H1 (cell line): ENCODE measurements at regions of chr6 and their contacts with region 1.

Region 1: DNA sequence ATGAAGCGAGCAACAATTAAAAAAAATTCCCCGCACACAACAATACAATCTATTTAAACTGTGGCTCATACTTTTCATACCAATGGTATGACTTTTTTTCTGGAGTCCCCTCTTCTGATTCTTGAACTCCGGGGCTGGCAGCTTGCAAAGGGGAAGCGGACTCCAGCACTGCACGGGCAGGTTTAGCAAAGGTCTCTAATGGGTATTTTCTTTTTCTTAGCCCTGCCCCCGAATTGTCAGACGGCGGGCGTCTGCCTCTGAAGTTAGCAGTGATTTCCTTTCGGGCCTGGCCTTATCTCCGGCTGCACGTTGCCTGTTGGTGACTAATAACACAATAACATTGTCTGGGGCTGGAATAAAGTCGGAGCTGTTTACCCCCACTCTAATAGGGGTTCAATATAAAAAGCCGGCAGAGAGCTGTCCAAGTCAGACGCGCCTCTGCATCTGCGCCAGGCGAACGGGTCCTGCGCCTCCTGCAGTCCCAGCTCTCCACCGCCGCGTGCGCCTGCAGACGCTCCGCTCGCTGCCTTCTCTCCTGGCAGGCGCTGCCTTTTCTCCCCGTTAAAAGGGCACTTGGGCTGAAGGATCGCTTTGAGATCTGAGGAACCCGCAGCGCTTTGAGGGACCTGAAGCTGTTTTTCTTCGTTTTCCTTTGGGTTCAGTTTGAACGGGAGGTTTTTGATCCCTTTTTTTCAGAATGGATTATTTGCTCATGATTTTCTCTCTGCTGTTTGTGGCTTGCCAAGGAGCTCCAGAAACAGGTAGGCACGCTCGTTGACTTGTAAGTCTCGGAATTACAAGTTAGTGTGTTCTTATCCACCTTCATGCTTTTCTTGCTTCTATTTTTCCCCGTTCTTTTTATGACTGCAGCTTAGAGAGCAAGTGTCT is at the start of gene EDN1:
- DNase-seq: peak; percentile 61 to 81
- H3K4me3 ChIP-seq: peak within 1 kb of the TSS; percentile 26 to 69 (median 50); a peak in 7 of 8 replicates
- H3K27ac ChIP-seq: no peak within 1 kb of the TSS
- H3K4me1 ChIP-seq: peaks cover 9 to 20% (median 11%) of the 10 kb centered on the region in 4 experiments
- H3K27me3 ChIP-seq: peaks cover 0 to 10% (median 2%) of the 10 kb centered on the region in 4 experiments; a peak in 4 of 7 replicates
- CTCF ChIP-seq: peak; percentile 52 to 58 (median 54)
- EP300 ChIP-seq: no peak
- POLR2A ChIP-seq: no peak
- RAD21 ChIP-seq: peak; percentile 54 to 65
- total RNA-seq, gene EDN1: 1.1 and 1.2 TPM in 2 replicates

Region 2: GRCh38 chr6:12208190-12208589 is 82.0 kb before region 1 on chr6:
- CTCF ChIA-PET with region 1: no interaction called
- POLR2A ChIA-PET with region 1: no interaction called
- DNase-seq: no peak
- H3K4me3 ChIP-seq: no peak overlapping the region
- H3K27ac ChIP-seq: no peak overlapping the region
- H3K4me1 ChIP-seq: peaks cover 0 to under 1% (median 0%) of the 10 kb centered on the region in 4 experiments; a peak in 1 of 7 replicates
- H3K27me3 ChIP-seq: no peaks in the 10 kb centered on the region
- CTCF ChIP-seq: no peak
- EP300 ChIP-seq: no peak
- POLR2A ChIP-seq: no peak
- RAD21 ChIP-seq: no peak

Region 3: DNA sequence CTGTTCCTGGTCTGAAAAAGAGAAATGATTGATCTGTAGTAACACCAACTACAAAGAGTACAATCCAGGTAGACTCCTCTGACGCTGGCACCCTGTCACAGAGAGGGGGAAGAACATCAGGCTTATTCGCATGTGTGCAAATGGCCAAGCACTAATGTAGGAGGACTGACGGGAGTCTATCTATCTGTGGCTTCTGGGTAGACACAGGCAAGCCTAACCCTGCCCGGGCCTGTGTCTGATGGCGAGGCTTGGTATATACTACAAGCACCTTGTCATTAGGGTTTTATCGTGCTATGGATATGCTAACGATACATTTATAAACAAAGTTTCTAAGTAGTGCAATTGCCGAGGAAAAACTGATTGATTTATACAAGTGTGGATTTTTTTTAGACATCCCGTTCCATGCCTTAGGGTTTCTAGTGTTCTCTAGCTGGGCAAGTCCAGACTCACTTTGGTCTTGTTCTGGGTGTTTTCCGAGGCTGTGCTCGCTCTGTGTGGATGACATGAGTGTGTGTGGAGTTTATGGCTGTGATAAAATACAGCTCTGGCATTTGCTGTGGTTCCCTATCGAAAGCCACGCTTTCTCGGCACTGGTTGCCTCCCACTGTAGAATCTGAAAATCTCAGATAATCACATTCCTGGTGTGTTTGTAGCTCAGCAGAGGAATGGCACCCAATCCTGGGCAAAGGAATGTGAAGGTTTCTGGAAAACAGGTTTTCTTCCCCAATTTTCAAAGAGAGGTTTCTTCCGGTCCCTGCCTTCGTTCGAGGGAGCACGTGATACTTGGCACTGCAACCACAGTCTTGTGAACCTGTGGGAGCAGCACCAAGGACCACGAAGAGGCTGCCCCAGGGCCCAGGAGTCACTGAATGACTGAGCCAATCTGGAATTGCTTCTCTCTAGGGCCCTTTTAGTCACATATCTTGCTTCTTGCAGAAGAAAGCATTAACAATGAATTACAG is 67.5 kb before region 1 on chr6:
- CTCF ChIA-PET with region 1: interaction called, 10 read pairs
- POLR2A ChIA-PET with region 1: no interaction called
- DNase-seq: no peak
- H3K4me3 ChIP-seq: no peak overlapping the region
- H3K27ac ChIP-seq: no peak overlapping the region
- H3K4me1 ChIP-seq: no peaks in the 10 kb centered on the region
- H3K27me3 ChIP-seq: no peaks in the 10 kb centered on the region
- CTCF ChIP-seq: no peak
- EP300 ChIP-seq: no peak
- POLR2A ChIP-seq: no peak
- RAD21 ChIP-seq: no peak

Region 4: GRCh38 chr6:12245763-12246718 is 44.1 kb before region 1 on chr6:
- CTCF ChIA-PET with region 1: interaction called, 11 read pairs
- POLR2A ChIA-PET with region 1: no interaction called
- DNase-seq: no peak
- H3K4me3 ChIP-seq: no peak overlapping the region
- H3K27ac ChIP-seq: no peak overlapping the region
- H3K4me1 ChIP-seq: peaks cover 0 to 5% (median 3%) of the 10 kb centered on the region in 4 experiments; a peak in 3 of 7 replicates
- H3K27me3 ChIP-seq: no peaks in the 10 kb centered on the region
- CTCF ChIP-seq: peak in 1 of 3 experiments; percentile 16; a peak in 1 of 4 replicates
- EP300 ChIP-seq: no peak
- POLR2A ChIP-seq: no peak
- RAD21 ChIP-seq: peak in 1 of 2 experiments; percentile 21; a peak in 1 of 4 replicates

Region 5: GRCh38 chr6:12311106-12311505 is 20.9 kb after region 1 on chr6:
- CTCF ChIA-PET with region 1: interaction called, 12 read pairs
- POLR2A ChIA-PET with region 1: no interaction called
- DNase-seq: peak in 1 of 2 experiments; percentile 27
- H3K4me3 ChIP-seq: no peak overlapping the region
- H3K27ac ChIP-seq: no peak overlapping the region
- H3K4me1 ChIP-seq: no peaks in the 10 kb centered on the region
- H3K27me3 ChIP-seq: no peaks in the 10 kb centered on the region
- CTCF ChIP-seq: peak in 2 of 3 experiments; percentile 3 to 5; a peak in 1 of 4 replicates
- EP300 ChIP-seq: no peak
- POLR2A ChIP-seq: no peak
- RAD21 ChIP-seq: peak; percentile 24 to 44; a peak in 1 of 4 replicates

Region 6: DNA sequence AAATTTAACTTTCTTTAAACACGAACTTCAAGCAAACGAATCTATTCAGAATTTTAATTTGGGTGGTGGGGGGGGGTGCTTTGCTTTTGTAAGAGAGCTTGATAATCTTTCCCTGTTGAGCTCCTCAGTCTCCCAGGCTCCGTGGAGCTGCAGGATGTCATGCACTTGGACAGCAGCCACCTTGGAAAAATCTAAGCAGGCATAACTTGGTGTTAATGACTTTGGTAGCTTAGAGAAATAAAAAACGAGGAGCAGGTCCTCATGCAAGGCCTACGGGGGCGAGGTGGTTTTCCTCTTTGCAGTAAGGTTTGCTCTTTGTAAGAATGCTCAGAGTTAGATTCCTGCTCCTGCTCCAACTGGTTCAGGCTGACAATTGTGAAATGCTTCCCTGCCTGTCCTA is 102.3 kb after region 1 on chr6:
- CTCF ChIA-PET with region 1: no interaction called
- POLR2A ChIA-PET with region 1: no interaction called
- DNase-seq: no peak
- H3K4me3 ChIP-seq: no peak overlapping the region
- H3K27ac ChIP-seq: no peak overlapping the region
- H3K4me1 ChIP-seq: no peaks in the 10 kb centered on the region
- H3K27me3 ChIP-seq: no peaks in the 10 kb centered on the region
- CTCF ChIP-seq: no peak
- EP300 ChIP-seq: no peak
- POLR2A ChIP-seq: no peak
- RAD21 ChIP-seq: no peak

Region 7: GRCh38 chr6:12504319-12504966 is 214.3 kb after region 1 on chr6:
- CTCF ChIA-PET with region 1: interaction called, 28 read pairs
- POLR2A ChIA-PET with region 1: no interaction called
- DNase-seq: no peak
- H3K4me3 ChIP-seq: no peak overlapping the region
- H3K27ac ChIP-seq: no peak overlapping the region
- H3K4me1 ChIP-seq: no peaks in the 10 kb centered on the region
- H3K27me3 ChIP-seq: no peaks in the 10 kb centered on the region
- CTCF ChIP-seq: peak; percentile 30 to 84 (median 70)
- EP300 ChIP-seq: no peak
- POLR2A ChIP-seq: no peak
- RAD21 ChIP-seq: peak; percentile 74 to 80